Gastrocnemius medialis (tissue), 4 donors: ENCODE measurements at regions of chr5 and their contacts with region 1.

Region 1: DNA sequence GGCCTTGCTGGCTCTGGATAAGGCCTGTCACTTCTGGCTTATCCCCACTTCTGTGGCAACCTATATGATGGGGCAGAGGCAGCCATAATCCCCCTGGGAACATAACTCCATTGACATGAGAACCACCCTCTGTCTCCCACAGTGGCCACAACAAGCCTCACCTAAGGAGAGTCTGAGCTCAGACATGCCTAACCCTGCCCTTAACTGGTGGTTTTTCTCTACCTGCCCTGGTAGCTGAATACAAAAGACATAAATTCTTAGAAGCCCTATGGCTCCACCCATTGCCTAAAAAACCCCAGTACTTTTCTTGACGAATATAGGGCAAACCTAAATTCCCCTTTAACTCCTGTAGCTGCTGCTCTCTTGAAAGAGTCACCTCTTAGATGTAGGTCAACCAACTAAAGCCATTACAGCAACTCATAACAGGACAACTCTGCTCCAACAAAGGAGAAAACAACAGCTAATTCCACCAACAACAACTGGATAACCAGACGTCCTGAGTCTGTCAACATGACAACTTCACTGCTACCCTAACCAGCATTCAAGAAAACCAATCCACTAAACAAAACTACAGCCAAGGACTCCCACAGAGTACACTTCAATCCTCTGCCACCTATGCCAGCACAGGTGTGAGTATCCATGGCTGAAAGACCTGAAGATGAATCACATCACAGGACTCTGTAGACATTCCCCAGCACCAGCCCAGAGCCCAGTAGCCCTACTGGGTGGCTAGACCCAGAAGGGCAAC is 427.7 kb downstream of the PRELID2 start:
- DNase-seq: no peak
- ATAC-seq: no peak
- H3K4me3 ChIP-seq: no peak overlapping the region
- H3K27ac ChIP-seq: no peak overlapping the region
- H3K4me1 ChIP-seq: no peaks in the 10 kb centered on the region
- H3K27me3 ChIP-seq: no peaks in the 10 kb centered on the region
- CTCF ChIP-seq: no peak
- POLR2A ChIP-seq: no peak

Region 2: DNA sequence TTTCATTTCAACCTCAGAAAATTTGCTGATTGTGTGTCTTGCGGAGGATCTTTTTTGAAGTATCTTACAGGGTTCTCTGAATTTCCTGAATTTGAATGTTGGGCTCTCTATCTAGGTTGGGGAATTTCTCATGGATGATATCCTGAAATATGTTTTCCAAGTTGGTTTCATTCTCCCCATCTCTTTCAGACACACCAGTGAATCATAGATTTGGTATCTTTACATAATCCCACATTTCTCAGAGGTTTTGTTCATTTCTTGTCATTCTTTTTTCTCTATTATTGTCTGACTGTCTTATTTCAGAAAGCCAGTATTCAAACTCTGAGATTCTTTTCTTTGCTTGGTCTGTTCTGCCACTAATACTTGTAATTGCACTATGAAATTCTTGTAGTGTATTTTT is 29.2 kb before region 1 on chr5:
- in situ Hi-C with region 1: no loop called
- intact Hi-C with region 1: loop called (anchors 2 kb)
- DNase-seq: no peak
- ATAC-seq: no peak
- H3K4me3 ChIP-seq: no peak overlapping the region
- H3K27ac ChIP-seq: no peak overlapping the region
- H3K4me1 ChIP-seq: no peaks in the 10 kb centered on the region
- H3K27me3 ChIP-seq: no peaks in the 10 kb centered on the region
- CTCF ChIP-seq: no peak
- POLR2A ChIP-seq: no peak

Region 3: DNA sequence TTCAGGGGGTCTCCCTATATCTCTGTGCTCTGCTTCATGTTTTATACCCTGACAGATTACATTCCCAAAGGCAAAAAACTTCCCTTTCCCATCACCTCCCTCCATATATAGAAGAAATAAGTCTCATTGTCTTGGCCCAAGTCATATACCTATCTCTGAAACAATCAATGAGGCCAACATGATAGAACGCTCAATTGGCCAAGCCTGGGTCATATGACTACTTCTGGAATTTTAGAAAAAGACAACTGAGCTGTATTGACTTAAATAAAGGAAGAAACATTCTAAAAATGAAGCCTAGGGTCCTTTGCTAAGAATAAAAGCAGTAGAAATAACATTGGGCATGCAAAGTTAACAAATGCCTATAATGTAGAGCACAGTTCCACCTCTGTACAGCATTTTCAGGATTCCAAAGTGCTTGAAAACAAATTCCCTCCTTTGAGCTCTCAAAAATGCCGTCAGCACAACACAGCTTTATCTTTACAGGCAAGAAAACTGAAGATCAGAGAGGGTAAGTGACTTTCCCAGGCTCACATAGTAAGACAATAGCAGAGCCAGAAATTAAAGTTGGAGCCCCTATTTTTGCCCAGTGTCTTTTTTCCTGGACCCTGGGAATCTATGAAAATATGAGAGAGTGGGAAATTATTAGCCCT is 35.9 kb after region 1 on chr5:
- in situ Hi-C with region 1: no loop called
- intact Hi-C with region 1: no loop called
- DNase-seq: no peak
- ATAC-seq: no peak
- H3K4me3 ChIP-seq: no peak overlapping the region
- H3K27ac ChIP-seq: no peak overlapping the region
- H3K4me1 ChIP-seq: peaks cover 0 to 2% of the 10 kb centered on the region in 2 donors
- H3K27me3 ChIP-seq: no peaks in the 10 kb centered on the region
- CTCF ChIP-seq: no peak
- POLR2A ChIP-seq: no peak

Region 4: GRCh38 chr5:145903113-145903512 is 495.6 kb after region 1 on chr5:
- in situ Hi-C with region 1: no loop called
- intact Hi-C with region 1: no loop called
- DNase-seq: no peak
- ATAC-seq: no peak
- H3K4me3 ChIP-seq: no peak overlapping the region
- H3K27ac ChIP-seq: no peak overlapping the region
- H3K4me1 ChIP-seq: no peaks in the 10 kb centered on the region
- H3K27me3 ChIP-seq: no peaks in the 10 kb centered on the region
- CTCF ChIP-seq: no peak
- POLR2A ChIP-seq: no peak